ENCODE measurements at regions of chr13 and their contacts with region 1.

Region 1: DNA sequence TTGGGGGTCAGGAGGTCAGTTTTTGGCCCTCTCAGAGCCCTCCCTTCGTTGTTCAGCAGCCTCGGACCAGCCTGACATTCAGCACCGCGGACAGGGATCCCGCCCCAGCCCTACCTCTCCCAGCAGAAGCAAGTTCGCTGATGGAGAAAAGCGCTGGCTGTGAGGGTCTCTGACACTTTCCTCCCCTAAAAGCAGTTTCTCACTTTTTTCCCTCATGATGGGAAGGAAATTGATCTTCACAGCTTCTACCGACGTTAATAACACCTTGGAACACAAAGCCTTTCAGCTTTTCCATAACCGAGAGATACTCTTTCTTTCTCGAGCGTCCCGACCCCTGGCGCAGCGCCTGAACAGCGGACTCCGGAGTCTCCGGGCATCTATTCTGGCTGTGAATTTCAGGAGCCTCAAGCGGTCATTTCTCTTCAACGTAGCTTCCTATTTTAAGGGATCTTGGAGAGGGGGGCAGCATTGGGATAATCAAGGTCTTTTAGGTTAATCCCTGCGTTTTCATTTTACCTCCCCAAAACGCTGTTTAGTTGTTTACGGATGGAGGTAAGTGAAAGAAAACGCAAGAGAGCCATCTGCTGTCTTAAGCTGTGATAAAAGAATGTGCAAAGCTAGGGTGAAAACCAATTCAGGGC is 467.2 kb downstream of the ITGBL1 start:
- DNase-seq: no peak
- ATAC-seq: peak; percentile 50
- H3K4me3 ChIP-seq: no peak overlapping the region
- H3K27ac ChIP-seq: no peak overlapping the region
- H3K4me1 ChIP-seq: no peaks in the 10 kb centered on the region
- H3K27me3 ChIP-seq: peaks cover 3 to 11% of the 10 kb centered on the region in 2 experiments
- CTCF ChIP-seq: no peak; a peak in 1 of 6 replicates
- EP300 ChIP-seq: no peak
- POLR2A ChIP-seq: no peak
- RAD21 ChIP-seq: 0 out of 2 replicates have a peak, but pooled peaks have one; percentile 8

Region 2: DNA sequence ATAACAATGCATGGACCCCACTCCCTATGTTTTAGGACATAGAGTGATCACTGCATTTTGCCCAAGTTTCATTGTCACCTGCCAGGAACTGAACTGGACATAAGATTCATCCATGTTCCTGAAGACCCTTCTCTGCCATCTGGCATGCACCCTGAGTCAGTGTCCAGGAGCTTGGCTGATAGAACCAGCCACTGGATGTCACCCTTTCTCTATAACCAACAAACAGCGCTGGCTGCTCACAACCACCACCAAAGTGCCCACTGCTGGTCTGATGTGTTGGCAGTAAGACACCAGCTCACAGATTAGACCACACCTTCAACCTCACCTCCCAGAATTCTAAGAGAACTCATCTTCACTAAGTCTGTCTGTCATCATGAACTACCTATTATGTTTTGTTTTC is 133.8 kb before region 1 on chr13:
- CTCF ChIA-PET with region 1: no interaction called
- POLR2A ChIA-PET with region 1: no interaction called
- RAD21 ChIA-PET with region 1: no interaction called
- SMC1A ChIA-PET with region 1: interaction called, 6 read pairs
- in situ Hi-C with region 1: no loop called
- intact Hi-C with region 1: loop called (anchors 5 kb)
- DNase-seq: no peak
- ATAC-seq: peak; percentile 95
- H3K4me3 ChIP-seq: no peak overlapping the region
- H3K27ac ChIP-seq: no peak overlapping the region
- H3K4me1 ChIP-seq: no peaks in the 10 kb centered on the region
- H3K27me3 ChIP-seq: no peaks in the 10 kb centered on the region; a peak in 1 of 4 replicates
- CTCF ChIP-seq: peak; percentile 7 to 37 (median 18); a peak in 3 of 6 replicates
- EP300 ChIP-seq: no peak
- POLR2A ChIP-seq: no peak
- RAD21 ChIP-seq: 0 out of 2 replicates have a peak, but pooled peaks have one; percentile 9